ENCODE measurements at regions of chr19 and their contacts with region 1.

Region 1: DNA sequence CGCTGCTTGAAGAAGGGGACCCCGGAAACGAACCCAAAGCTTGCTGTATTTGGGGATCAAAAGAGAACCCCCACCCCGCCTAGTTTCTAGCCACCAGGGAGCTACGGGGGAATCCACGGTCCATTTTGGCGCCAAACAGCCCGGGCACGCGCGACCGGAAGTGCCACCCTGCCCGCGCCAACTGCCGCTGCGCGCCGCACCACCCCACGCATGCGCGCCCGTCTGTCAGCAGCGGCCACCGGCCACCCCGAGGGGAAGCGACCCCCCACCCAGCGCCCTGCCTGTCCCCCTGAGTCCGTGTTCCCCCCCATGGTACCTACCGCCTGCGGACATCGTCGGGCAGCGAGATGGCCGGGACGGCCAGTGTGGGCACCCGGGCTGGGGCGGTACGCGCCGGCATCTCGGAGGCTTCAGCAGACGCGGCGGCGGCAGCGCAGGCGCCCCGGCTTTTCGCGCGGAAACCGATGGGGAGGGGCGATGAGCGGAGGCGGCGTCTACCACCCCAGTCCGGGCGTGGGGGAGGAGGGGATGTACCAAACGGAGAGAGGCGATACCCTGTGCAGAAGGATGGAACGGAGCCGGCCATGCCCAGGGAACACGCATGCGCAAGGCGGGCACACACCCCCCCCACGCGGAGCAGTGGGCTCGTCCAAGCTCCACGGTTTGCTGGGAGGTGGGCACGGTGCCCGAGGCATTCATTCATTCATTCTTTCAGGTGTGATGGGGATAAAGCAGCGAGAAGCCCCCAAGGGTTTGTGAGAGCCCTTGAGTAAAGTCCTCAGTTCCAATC is at the start of gene DNMT1:
- DNase-seq: peak; percentile 96
- H3K4me3 ChIP-seq: peak within 1 kb of the TSS; percentile 67 to 88 (median 86)
- H3K27ac ChIP-seq: peak within 1 kb of the TSS; percentile 46
- H3K4me1 ChIP-seq: peaks cover 16% of the 10 kb centered on the region
- H3K27me3 ChIP-seq: no peaks in the 10 kb centered on the region
- CTCF ChIP-seq: no peak
- POLR2A ChIP-seq: peak; percentile 94
- total RNA-seq, gene DNMT1: 154 and 165 TPM in 2 replicates

Region 2: DNA sequence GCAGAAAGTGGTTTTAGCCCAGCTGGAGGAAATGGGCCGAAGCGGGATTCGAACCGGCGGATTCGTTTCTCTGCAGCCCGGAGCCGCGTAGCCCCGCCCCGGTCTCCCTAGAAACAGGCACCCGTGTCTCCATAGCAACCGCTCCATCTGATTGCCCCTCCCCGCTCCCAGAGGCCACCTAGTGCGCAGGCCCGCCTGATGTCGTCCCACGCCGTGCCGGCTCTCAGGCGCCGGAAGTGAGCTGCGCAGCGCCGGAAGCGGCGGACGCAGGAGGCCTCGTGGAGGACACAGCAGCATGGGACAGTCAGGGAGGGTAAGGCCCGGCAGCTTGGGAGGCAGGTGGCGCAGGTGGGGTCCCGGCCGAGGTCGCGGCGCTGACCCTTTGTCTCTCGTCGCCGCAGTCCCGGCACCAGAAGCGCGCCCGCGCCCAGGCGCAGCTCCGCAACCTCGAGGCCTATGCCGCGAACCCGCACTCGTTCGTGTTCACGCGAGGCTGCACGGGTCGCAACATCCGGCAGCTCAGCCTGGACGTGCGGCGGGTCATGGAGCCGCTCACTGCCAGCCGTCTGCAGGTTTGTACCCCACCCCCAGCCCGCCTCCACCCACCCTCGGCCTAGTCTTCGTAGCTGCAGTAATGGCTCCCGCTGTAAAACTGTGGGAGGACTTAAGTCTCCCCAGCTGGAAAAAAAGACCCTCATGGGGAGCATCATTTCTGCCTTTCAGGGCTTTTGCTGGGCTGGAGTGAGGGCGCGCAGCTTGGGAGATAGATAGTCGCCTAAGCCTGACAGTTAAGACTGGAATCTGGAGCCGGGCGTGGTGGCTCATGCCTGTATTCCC is 88.4 kb before region 1 on chr19 and contains the start of gene PPAN:
- CTCF ChIA-PET with region 1: no interaction called
- POLR2A ChIA-PET with region 1: no interaction called
- dilution Hi-C with region 1: no loop called
- intact Hi-C with region 1: loop called (anchors 10 kb)
- DNase-seq: peak; percentile 98
- H3K4me3 ChIP-seq: peak within 1 kb of the TSS; percentile 87 to 98 (median 95)
- H3K27ac ChIP-seq: peak within 1 kb of the TSS; percentile 50
- H3K4me1 ChIP-seq: peaks cover 9% of the 10 kb centered on the region
- H3K27me3 ChIP-seq: no peaks in the 10 kb centered on the region
- CTCF ChIP-seq: no peak
- POLR2A ChIP-seq: peak; percentile 89
- total RNA-seq, gene PPAN: 50.4 and 51.6 TPM in 2 replicates

Region 3: DNA sequence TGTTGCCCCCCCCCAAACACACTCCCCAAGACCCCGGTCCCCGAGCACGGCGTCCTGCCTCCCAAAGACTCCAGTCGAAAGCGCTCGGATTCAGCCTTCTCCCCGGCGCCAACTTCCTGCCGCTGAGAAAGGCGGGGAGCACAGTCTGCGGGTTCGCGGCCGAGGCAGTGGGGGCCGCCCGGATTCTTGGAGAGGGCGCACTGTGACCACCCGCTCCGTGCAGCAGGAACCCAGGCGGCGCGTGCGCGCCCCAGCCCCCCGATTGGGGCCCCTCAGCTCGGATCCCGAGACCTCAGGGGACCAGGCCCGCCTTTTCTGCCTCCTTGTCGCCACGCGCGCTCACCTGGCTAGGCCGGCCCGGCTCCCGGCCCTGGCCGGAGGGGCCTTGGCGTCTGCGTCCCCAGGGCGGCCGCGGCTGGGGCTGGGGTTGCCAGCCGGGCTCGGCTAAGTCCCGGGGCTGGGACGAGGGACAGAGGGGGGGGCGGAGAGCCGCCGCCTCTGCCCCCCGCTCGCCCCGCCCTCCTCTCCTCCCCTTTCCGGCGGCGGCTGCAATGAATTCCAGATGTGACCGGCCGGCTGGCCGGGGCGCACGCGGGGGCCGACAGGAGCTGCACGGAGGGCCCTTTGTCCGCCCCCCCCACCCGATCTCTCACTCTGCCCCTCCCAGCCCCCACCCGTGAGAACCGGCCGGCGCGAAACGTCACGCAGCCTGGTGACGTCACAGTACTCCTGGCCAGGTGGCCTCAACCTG is 36.3 kb after region 1 on chr19 and contains the start of gene S1PR2:
- CTCF ChIA-PET with region 1: interaction called, 7 read pairs
- POLR2A ChIA-PET with region 1: no interaction called
- dilution Hi-C with region 1: no loop called
- intact Hi-C with region 1: loop called (anchors 2 kb)
- DNase-seq: peak; percentile 31
- H3K4me3 ChIP-seq: peak within 1 kb of the TSS; percentile 44 to 71 (median 68)
- H3K27ac ChIP-seq: no peak within 1 kb of the TSS
- H3K4me1 ChIP-seq: peaks cover 9% of the 10 kb centered on the region
- H3K27me3 ChIP-seq: no peaks in the 10 kb centered on the region
- CTCF ChIP-seq: no peak
- POLR2A ChIP-seq: no peak
- total RNA-seq, gene S1PR2: 1.0 and 1.3 TPM in 2 replicates

Region 4: GRCh38 chr19:10380313-10381102 is 185.8 kb after region 1 on chr19 and contains the start of gene TYK2:
- CTCF ChIA-PET with region 1: no interaction called
- POLR2A ChIA-PET with region 1: no interaction called
- dilution Hi-C with region 1: no loop called
- intact Hi-C with region 1: loop called (anchors 10 kb)
- DNase-seq: peak; percentile 99
- H3K4me3 ChIP-seq: peak within 1 kb of the TSS; percentile 78 to 96 (median 89)
- H3K27ac ChIP-seq: peak within 1 kb of the TSS; percentile 10
- H3K4me1 ChIP-seq: peaks cover 12% of the 10 kb centered on the region
- H3K27me3 ChIP-seq: no peaks in the 10 kb centered on the region
- CTCF ChIP-seq: no peak
- POLR2A ChIP-seq: peak; percentile 90
- total RNA-seq, gene TYK2: 138 and 142 TPM in 2 replicates

Measured in endothelial cell of umbilical vein (primary cell).